A549 (cell line): ENCODE measurements at regions of chr17 and their contacts with region 1.

Region 1: GRCh38 chr17:32877164-32877764 is 340 bp upstream of the MYO1D start:
- DNase-seq: peak; percentile 75 to 84
- ATAC-seq: peak; percentile 96 to 97
- H3K4me3 ChIP-seq: peak overlapping the region; percentile 77
- H3K27ac ChIP-seq: peak overlapping the region; percentile 66 to 88; a peak in 5 of 6 replicates
- H3K4me1 ChIP-seq: peaks cover 9% of the 10 kb centered on the region; the same call in 1 of the 3 replicates
- CTCF ChIP-seq: peak; percentile 99
- EP300 ChIP-seq: no peak
- POLR2A ChIP-seq: no peak
- RAD21 ChIP-seq: peak; percentile 50 to 79

Region 2: DNA sequence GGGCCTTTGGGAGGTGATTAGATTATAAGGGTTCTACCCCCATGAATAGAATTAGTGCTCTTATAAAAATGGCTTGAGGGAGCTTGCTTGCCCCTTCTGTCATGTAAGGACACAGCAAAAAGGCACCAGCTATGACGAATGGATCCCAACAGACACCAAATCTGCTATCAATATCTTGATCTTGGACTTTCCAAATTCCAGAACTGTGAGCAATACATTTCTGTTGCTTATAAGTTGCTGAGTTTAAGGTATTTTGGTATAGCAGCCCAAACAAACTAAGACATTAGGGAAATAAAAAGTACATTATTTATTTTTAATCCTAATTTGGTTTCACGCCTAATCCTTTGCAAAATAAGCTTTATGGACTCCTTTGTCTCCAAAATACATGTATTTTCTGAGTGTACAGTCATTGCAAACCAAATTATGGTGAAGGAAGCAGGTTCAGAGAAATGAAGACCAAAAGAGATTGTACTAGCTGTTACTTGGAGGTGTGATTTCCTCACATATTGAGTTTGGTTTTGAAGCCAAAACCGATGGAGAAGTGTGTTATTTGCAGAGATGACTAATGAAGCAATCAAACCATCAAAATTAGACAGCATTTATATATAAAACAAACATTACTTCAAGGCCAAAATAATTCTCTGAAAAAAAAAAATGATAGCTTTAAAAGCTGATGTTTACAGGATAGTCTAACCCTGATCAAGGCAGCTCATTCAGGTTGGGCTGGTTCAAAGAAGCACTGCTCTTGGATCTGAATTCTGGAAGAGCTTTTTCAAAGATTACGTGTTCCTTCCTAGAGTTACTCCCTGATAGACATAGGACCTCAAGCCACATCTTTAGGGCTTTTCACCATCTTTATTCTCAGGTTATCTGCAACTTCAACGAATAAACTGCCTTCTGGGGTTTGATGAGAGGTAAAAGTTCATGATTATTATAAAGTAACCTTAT is 72.0 kb before region 1 on chr17:
- CTCF ChIA-PET with region 1: interaction called, 14 read pairs
- POLR2A ChIA-PET with region 1: no interaction called
- DNase-seq: no peak
- ATAC-seq: no peak
- H3K4me3 ChIP-seq: no peak overlapping the region
- H3K27ac ChIP-seq: no peak overlapping the region
- H3K4me1 ChIP-seq: peaks cover 9% of the 10 kb centered on the region; the same call in 2 of the 3 replicates
- CTCF ChIP-seq: no peak
- EP300 ChIP-seq: no peak
- POLR2A ChIP-seq: no peak
- RAD21 ChIP-seq: no peak

Region 3: GRCh38 chr17:32835291-32835761 is 41.9 kb before region 1 on chr17:
- CTCF ChIA-PET with region 1: interaction called, 38 read pairs
- POLR2A ChIA-PET with region 1: no interaction called
- DNase-seq: no peak
- ATAC-seq: no peak
- H3K4me3 ChIP-seq: no peak overlapping the region
- H3K27ac ChIP-seq: no peak overlapping the region
- H3K4me1 ChIP-seq: no peaks in the 10 kb centered on the region
- CTCF ChIP-seq: no peak
- EP300 ChIP-seq: no peak
- POLR2A ChIP-seq: no peak
- RAD21 ChIP-seq: no peak

Region 4: DNA sequence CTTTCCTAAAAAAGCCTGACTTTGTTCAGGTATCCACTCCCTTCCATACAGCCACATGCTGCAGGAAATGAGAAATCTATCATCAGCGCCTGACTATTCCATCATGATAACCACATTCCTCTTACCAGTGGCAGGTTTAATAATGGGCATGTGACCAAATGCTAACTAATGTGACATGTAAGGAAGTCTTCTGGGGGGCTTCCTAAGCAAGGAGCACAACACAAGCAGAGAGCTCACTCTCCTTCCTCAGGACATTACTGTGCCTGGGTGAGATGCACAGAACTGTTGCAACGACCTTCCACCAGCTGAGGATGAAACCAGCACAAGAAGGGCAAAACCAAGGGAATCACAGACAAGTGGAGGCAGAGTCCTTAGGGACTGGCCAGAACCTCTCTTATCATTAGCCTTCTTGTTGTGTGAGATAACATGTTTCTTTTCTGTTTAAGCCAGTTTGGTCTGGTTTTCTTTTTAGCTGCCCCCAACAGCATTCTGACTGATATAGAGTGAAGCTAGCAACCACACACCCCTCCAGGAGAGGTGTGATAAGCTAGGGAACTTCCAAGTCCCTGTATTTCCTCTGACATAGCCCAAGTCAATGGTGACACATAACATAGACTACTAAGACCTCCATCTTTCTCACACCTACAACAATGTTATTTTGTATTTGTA is 17.3 kb before region 1 on chr17:
- CTCF ChIA-PET with region 1: interaction called, 34 read pairs
- POLR2A ChIA-PET with region 1: no interaction called
- DNase-seq: no peak
- ATAC-seq: no peak
- H3K4me3 ChIP-seq: no peak overlapping the region
- H3K27ac ChIP-seq: no peak overlapping the region
- H3K4me1 ChIP-seq: no peaks in the 10 kb centered on the region
- CTCF ChIP-seq: no peak
- EP300 ChIP-seq: no peak
- POLR2A ChIP-seq: no peak
- RAD21 ChIP-seq: no peak

Region 5: GRCh38 chr17:32909787-32910369 is 32.6 kb after region 1 on chr17:
- CTCF ChIA-PET with region 1: interaction called, 26 read pairs
- POLR2A ChIA-PET with region 1: no interaction called
- DNase-seq: peak; percentile 83 to 86
- ATAC-seq: peak; percentile 81 to 89
- H3K4me3 ChIP-seq: no peak overlapping the region
- H3K27ac ChIP-seq: peak overlapping the region in 1 of 2 experiments; percentile 39; a peak in 1 of 6 replicates
- H3K4me1 ChIP-seq: peaks cover 7% of the 10 kb centered on the region
- CTCF ChIP-seq: peak; percentile 67
- EP300 ChIP-seq: no peak
- POLR2A ChIP-seq: no peak
- RAD21 ChIP-seq: peak; percentile 57 to 66

Region 6: DNA sequence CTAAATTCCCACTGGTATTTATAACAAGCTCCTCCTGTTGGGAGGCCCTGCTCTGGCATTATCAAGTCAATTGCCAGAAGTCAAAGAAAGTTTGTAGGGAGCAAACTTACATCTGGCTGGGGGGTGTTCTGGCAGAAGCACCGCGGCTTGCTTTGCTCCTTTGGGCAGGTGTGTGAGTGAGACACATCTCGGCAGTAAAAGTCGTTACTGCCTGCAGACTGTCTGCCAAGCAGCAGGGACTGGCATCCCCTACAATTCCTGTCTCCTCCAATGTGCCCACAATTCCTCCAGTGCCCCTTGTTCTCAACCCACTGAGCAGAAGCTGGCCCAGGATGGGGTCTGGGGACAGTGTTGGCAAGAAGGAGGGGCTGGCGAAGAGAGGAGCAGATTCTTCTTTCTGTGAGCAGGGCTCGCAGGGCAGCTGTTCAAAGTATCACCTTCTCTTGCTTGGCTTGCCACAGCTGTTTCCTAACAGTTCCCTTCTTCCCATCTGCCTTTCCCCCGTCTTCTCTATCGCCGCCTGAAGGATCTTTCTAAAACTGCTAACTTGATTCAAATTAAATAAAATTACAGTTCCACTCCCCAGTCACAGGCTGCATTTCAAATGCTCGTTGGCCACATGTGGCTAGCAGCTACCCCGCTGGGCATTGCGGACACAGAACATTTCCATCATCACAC is 144.6 kb after region 1 on chr17:
- CTCF ChIA-PET with region 1: no interaction called
- POLR2A ChIA-PET with region 1: no interaction called
- DNase-seq: no peak
- ATAC-seq: peak in 1 of 2 experiments; percentile 30; a peak in 2 of 6 replicates
- H3K4me3 ChIP-seq: no peak overlapping the region
- H3K27ac ChIP-seq: no peak overlapping the region
- H3K4me1 ChIP-seq: no peaks in the 10 kb centered on the region
- CTCF ChIP-seq: no peak
- EP300 ChIP-seq: no peak
- POLR2A ChIP-seq: no peak
- RAD21 ChIP-seq: no peak

Region 7: GRCh38 chr17:33302394-33302793 is 425.1 kb after region 1 on chr17:
- CTCF ChIA-PET with region 1: no interaction called
- POLR2A ChIA-PET with region 1: no interaction called
- DNase-seq: no peak
- ATAC-seq: no peak
- H3K4me3 ChIP-seq: no peak overlapping the region
- H3K27ac ChIP-seq: no peak overlapping the region
- H3K4me1 ChIP-seq: no peaks in the 10 kb centered on the region
- CTCF ChIP-seq: no peak
- EP300 ChIP-seq: no peak
- POLR2A ChIP-seq: no peak
- RAD21 ChIP-seq: no peak